Heart right ventricle (tissue), 16 donors: ENCODE measurements at regions of chr1 and their contacts with region 1.

Region 1: GRCh38 chr1:153816283-153816889 is 41.2 kb downstream of the SLC27A3 start:
- DNase-seq: no peak
- ATAC-seq: peak in 4 of 8 donors; percentile 32 to 78 (median 63)
- H3K4me3 ChIP-seq: no peak overlapping the region
- H3K27ac ChIP-seq: peak overlapping the region in 4 of 10 donors; percentile 7 to 57 (median 23)
- H3K4me1 ChIP-seq: peaks cover 0 to 25% (median under 1%) of the 10 kb centered on the region in 9 donors
- H3K27me3 ChIP-seq: no peaks in the 10 kb centered on the region
- CTCF ChIP-seq: no peak

Region 2: GRCh38 chr1:153711006-153711405 is 105.4 kb before region 1 on chr1:
- intact Hi-C with region 1: no loop called
- DNase-seq: no peak
- ATAC-seq: no peak
- H3K4me3 ChIP-seq: no peak overlapping the region
- H3K27ac ChIP-seq: no peak overlapping the region
- H3K4me1 ChIP-seq: no peaks in the 10 kb centered on the region
- H3K27me3 ChIP-seq: no peaks in the 10 kb centered on the region
- CTCF ChIP-seq: no peak

Region 3: DNA sequence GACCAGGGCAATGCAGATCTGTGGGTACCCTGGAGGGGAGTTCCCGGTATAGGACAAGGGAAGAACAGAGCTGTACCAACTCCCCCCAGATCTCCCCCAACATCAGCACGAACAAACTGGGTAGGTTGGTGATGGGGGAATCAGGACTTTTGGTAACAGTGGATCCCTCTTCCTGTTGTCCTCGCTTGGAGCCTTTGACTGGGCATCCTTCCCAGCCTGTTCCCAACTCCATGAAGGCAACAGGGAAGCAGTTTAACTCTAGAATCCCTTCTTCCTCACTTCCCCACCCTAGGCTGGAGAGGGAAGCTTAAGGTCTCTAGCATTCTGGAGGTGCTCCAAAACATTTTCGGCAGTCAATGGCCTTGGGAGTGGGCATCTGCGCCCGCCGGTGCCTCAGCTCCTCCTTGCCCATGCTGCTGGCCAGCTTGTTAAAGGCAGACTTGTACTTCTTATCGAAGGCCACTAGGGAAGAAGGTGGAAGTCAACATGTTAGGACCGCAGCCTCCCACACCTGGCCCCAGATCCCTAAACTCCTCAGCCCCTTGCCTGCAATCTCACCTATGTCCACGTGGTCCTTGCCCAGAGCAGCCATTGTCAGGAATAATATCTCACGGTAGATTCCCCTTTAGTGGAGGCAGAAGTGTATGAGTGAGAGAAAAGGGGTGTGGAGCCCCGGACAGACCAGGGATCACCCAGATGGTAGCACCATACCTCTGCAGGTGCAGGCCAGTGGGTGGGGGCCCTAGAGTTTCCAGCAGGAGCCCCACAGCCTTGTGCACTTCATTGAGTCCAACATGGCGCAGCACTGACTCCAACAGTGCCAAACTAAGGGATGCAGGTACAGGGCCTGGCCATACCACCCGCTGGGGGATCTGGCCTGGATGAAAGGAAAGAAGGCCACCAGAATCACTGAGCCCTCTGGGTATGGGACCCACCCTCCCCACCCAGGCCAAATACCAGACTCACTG is 113.9 kb after region 1 on chr1:
- intact Hi-C with region 1: loop called in 1 of 10 experiments (anchors 10 kb)
- DNase-seq: no peak
- ATAC-seq: peak in 1 of 8 donors; percentile 3
- H3K4me3 ChIP-seq: no peak overlapping the region
- H3K27ac ChIP-seq: no peak overlapping the region
- H3K4me1 ChIP-seq: peaks cover 0 to 15% (median 5%) of the 10 kb centered on the region in 9 donors
- H3K27me3 ChIP-seq: no peaks in the 10 kb centered on the region
- CTCF ChIP-seq: no peak

Region 4: DNA sequence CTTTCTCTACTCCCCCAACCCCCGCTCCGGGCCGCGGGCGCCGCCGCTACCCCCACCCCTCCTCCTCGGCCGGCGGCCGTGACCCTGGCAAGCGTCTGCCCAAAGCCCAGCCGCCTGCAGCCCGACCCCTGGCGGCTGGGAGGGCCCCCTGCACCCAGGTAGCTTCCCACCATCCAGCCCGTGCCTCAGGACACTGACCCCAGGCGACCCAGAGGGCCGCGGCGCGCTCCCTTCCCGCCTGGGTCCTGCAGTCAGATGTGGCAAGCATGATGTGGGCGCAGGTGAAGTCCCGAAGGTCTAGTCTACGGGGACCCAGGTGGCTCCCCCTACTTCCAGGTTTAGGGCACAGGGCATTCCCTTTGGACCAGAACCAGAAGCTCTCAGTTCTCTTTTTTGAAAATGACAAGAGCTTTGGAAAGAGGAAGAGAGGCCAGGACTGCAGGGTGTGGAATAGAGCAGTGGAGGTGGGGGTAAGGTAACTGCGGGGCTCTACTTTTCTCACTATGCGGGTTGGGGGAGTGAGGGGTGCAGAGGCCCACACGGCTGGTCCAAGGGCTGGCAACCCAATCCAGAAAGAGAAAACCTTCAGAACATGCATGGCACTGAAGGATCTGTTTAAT is 130.3 kb after region 1 on chr1 and contains the start of gene DENND4B:
- intact Hi-C with region 1: loop called in 5 of 10 experiments (anchors 1 to 10 kb)
- DNase-seq: peak; percentile 83 to 87
- ATAC-seq: peak; percentile 73 to 86 (median 78)
- H3K4me3 ChIP-seq: peak within 1 kb of the TSS; percentile 65 to 99 (median 91)
- H3K27ac ChIP-seq: peak within 1 kb of the TSS; percentile 97 to 100 (median 100)
- H3K4me1 ChIP-seq: peaks cover 5 to 44% (median 30%) of the 10 kb centered on the region in 9 donors
- H3K27me3 ChIP-seq: no peaks in the 10 kb centered on the region
- CTCF ChIP-seq: peak; percentile 89 to 98 (median 94)
- total RNA-seq, gene DENND4B: 29.4 to 60.4 (median 39.0) TPM